Caco-2 (cell line): ENCODE measurements at regions of chr7 and their contacts with region 1.

Region 1: DNA sequence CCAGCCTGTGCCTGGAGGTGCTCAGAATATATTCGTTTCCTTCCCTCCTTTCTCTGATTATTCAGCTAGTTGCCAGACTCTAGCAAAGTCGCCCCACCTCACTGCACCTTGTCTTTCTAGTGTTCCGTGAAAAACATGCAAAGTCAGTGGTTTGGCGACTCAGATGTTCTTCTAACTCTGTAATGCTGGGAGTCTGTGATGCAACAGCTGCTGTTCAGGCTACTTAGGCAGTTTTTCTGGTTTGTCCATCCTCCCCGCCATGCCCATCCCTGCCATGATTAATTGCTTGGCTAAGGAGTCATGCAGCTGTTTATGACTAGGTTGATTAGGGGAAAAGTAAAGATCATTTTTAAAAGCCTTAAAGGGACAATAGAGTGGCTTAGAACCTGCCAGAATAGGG is 99.4 kb downstream of the MTPN start:
- DNase-seq: peak; percentile 76 to 77
- H3K4me3 ChIP-seq: no peak overlapping the region
- H3K4me3 Mint-ChIP-seq: peak overlapping the region; percentile 23
- H3K27ac Mint-ChIP-seq: no peak overlapping the region
- H3K4me1 ChIP-seq: peaks cover 17% of the 10 kb centered on the region
- H3K4me1 Mint-ChIP-seq: peaks cover 16% of the 10 kb centered on the region
- H3K27me3 ChIP-seq: no peaks in the 10 kb centered on the region
- H3K27me3 Mint-ChIP-seq: no peaks in the 10 kb centered on the region
- CTCF ChIP-seq: no peak

Region 2: DNA sequence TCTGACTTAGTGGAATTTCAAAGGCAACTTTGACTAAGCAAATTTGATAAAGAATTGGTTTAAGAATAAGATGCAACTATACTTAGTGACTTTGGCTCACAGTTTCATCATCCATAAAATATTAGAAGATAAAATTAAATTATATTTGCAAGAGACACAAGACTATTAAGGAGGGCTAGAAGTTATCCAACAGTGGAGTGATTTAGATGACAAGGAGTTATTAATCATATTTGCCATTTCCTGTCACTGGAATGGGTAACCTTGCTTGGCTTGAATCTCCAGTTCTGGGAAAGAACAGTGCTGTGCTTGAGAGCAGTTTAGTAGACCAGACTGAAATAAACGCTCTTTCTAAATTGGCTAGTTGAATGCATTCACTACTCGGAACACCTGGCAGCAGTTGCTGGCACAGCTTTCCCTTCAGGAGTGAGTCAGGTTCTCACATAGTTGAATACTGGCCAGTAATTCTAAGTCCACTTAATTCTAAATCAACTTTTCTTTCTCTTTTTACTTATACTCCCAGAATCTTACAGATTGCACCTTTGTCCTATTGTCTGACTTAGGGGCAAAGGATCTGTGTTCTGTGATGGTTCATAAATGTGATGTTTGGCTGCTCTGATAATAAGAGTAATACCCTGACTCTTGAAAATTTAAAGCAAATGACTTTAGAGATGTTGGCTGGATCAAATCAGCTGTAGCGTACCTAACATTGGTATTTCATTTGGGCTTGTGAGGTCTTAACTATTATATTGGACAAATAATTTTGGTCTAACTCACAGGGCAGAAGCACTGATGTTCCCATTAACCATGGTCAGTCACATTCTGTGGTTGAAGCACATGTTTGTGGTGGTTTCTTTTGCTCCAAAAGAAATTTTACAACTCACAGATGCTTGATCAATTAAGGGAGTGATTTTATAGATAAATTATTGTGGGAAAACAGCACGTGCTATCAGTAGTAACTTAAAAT is 198.9 kb before region 1 on chr7:
- CTCF ChIA-PET with region 1: no interaction called
- POLR2A ChIA-PET with region 1: no interaction called
- intact Hi-C with region 1: no loop called
- DNase-seq: no peak
- H3K4me3 ChIP-seq: no peak overlapping the region
- H3K4me3 Mint-ChIP-seq: no peak overlapping the region
- H3K27ac Mint-ChIP-seq: no peak overlapping the region
- H3K4me1 ChIP-seq: no peaks in the 10 kb centered on the region
- H3K4me1 Mint-ChIP-seq: no peaks in the 10 kb centered on the region
- H3K27me3 ChIP-seq: no peaks in the 10 kb centered on the region
- H3K27me3 Mint-ChIP-seq: no peaks in the 10 kb centered on the region
- CTCF ChIP-seq: no peak

Region 3: GRCh38 chr7:135843214-135843613 is 34.6 kb before region 1 on chr7:
- CTCF ChIA-PET with region 1: no interaction called
- POLR2A ChIA-PET with region 1: no interaction called
- intact Hi-C with region 1: no loop called
- DNase-seq: no peak
- H3K4me3 ChIP-seq: no peak overlapping the region
- H3K4me3 Mint-ChIP-seq: no peak overlapping the region
- H3K27ac Mint-ChIP-seq: no peak overlapping the region
- H3K4me1 ChIP-seq: no peaks in the 10 kb centered on the region
- H3K4me1 Mint-ChIP-seq: peaks cover 9% of the 10 kb centered on the region
- H3K27me3 ChIP-seq: no peaks in the 10 kb centered on the region
- H3K27me3 Mint-ChIP-seq: no peaks in the 10 kb centered on the region
- CTCF ChIP-seq: no peak

Region 4: GRCh38 chr7:136009488-136010079 is 131.8 kb after region 1 on chr7:
- CTCF ChIA-PET with region 1: no interaction called
- POLR2A ChIA-PET with region 1: no interaction called
- intact Hi-C with region 1: loop called (anchors 5 kb)
- DNase-seq: peak in 1 of 2 experiments; percentile 60
- H3K4me3 ChIP-seq: no peak overlapping the region
- H3K4me3 Mint-ChIP-seq: no peak overlapping the region
- H3K27ac Mint-ChIP-seq: no peak overlapping the region
- H3K4me1 ChIP-seq: no peaks in the 10 kb centered on the region
- H3K4me1 Mint-ChIP-seq: no peaks in the 10 kb centered on the region
- H3K27me3 ChIP-seq: no peaks in the 10 kb centered on the region; the same call in 1 of the 2 replicates
- H3K27me3 Mint-ChIP-seq: peaks cover 5% of the 10 kb centered on the region
- CTCF ChIP-seq: peak; percentile 46 to 85